ENCODE measurements at regions of chr17 and their contacts with region 1.

Region 1: GRCh38 chr17:68172461-68172954 is 75.3 kb upstream of the AMZ2 start:
- DNase-seq: peak; percentile 62
- H3K4me3 ChIP-seq: no peak overlapping the region
- H3K27ac ChIP-seq: no peak overlapping the region
- H3K4me1 ChIP-seq: no peaks in the 10 kb centered on the region
- H3K27me3 ChIP-seq: no peaks in the 10 kb centered on the region
- CTCF ChIP-seq: peak; percentile 83 to 84
- POLR2A ChIP-seq: no peak

Region 2: DNA sequence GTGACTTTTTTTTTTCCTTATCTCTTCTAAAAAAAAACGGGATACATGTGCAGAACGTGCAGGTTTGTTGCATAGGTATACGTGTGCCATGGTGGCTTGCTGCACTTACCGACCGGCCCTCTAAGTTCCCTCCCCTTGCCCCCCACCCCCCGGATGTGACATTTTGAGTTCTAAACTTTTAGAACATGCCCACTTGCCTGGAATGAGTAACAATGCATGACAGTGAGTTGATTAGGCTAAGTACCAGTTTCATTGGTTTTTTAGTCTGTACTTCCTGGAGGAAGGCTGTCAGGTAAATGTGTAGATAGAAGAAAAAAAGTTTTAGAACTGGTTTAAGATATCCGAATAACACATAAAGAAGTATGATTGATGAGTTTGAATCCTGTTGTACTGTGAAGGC is 343.2 kb before region 1 on chr17:
- CTCF ChIA-PET with region 1: no interaction called
- POLR2A ChIA-PET with region 1: no interaction called
- dilution Hi-C with region 1: no loop called
- intact Hi-C with region 1: no loop called
- DNase-seq: no peak
- H3K4me3 ChIP-seq: no peak overlapping the region
- H3K27ac ChIP-seq: no peak overlapping the region
- H3K4me1 ChIP-seq: peaks cover 13% of the 10 kb centered on the region
- H3K27me3 ChIP-seq: no peaks in the 10 kb centered on the region
- CTCF ChIP-seq: no peak
- POLR2A ChIP-seq: no peak

Region 3: DNA sequence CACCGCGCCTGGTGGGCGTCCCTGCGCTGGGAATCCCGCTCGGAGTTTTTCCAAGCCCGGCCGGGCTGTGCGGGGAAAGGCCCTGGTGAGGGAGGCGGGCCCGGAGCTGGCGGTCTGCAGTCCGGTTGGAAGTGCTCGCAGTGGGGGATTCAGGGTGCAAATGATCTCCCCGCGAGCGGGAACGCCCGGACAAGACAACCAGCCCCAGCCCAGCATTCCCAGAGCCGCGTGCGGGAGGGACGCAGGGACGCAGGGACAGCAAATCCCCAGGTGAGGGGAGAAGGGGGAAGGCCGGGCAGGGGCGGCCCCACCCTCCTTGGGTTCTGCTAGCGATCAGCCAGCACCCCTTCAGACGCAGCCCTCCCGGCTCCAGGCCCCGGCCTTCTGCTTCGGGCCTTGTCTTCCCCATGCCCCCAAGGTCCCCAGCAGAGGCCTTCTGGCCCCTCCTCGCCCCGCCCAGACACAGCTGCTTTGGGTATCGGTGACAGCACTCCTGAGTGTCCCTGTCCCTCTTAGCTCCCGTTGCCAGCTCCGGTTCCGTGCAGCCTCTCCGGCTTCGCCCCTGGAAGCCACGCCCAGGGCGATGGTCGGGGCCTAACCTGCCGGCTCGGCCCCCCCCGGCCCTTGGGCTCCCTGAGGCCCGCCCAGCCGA is 24.6 kb after region 1 on chr17:
- CTCF ChIA-PET with region 1: interaction called, 29 read pairs
- POLR2A ChIA-PET with region 1: no interaction called
- dilution Hi-C with region 1: no loop called
- intact Hi-C with region 1: loop called (anchors 1 kb)
- DNase-seq: no peak
- H3K4me3 ChIP-seq: no peak overlapping the region
- H3K27ac ChIP-seq: no peak overlapping the region
- H3K4me1 ChIP-seq: peaks cover 12% of the 10 kb centered on the region
- H3K27me3 ChIP-seq: peaks cover 46 to 72% of the 10 kb centered on the region in 2 experiments
- CTCF ChIP-seq: no peak
- POLR2A ChIP-seq: no peak

Region 4: DNA sequence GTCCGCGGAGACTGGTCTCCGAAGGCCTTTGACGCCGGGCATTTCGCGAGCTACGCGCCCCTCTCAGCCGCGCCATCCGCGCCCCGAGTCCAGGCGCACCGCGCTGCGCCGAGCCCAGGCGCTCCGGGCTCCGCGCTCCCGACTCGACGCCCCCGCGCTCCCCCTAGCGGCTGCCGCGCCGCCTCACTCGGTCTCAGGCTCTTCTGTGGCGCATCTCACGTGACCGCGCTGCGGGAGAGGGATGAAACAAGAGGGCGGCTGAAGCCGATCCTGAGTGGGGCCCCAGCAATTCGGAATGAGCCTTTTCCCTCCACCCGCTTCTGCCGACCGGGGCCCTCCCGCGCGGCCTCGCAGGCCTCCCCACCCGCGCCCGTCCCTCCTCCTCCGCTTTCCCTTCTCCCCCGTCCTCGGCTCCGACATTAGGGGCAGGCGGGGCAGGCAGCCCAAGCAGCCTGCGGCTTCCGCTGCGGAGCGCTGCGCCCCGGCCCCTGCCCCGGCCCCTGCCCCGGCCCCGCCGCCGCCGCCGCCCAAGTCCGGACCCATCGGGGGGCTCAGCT is 32.8 kb after region 1 on chr17:
- CTCF ChIA-PET with region 1: interaction called, 29 read pairs
- POLR2A ChIA-PET with region 1: no interaction called
- dilution Hi-C with region 1: no loop called
- intact Hi-C with region 1: loop called (anchors 1 kb)
- DNase-seq: peak; percentile 88
- H3K4me3 ChIP-seq: peak overlapping the region; percentile 38 to 56 (median 50)
- H3K27ac ChIP-seq: peak overlapping the region; percentile 52
- H3K4me1 ChIP-seq: peaks cover 4% of the 10 kb centered on the region
- H3K27me3 ChIP-seq: peaks cover 0 to under 1% of the 10 kb centered on the region in 2 experiments
- CTCF ChIP-seq: peak; percentile 84 to 96
- POLR2A ChIP-seq: peak; percentile 77

Region 5: GRCh38 chr17:68255731-68256538 is 83.4 kb after region 1 on chr17:
- CTCF ChIA-PET with region 1: no interaction called
- POLR2A ChIA-PET with region 1: no interaction called
- dilution Hi-C with region 1: no loop called
- intact Hi-C with region 1: loop called (anchors 5 kb)
- DNase-seq: no peak
- H3K4me3 ChIP-seq: no peak overlapping the region
- H3K27ac ChIP-seq: no peak overlapping the region
- H3K4me1 ChIP-seq: peaks cover 20% of the 10 kb centered on the region
- H3K27me3 ChIP-seq: no peaks in the 10 kb centered on the region
- CTCF ChIP-seq: no peak
- POLR2A ChIP-seq: no peak

Region 6: GRCh38 chr17:68435876-68436842 is 263.7 kb after region 1 on chr17:
- CTCF ChIA-PET with region 1: interaction called, 5 read pairs
- POLR2A ChIA-PET with region 1: interaction called, 9 read pairs
- dilution Hi-C with region 1: no loop called
- intact Hi-C with region 1: loop called (anchors 1 kb)
- DNase-seq: peak; percentile 83
- H3K4me3 ChIP-seq: no peak overlapping the region
- H3K27ac ChIP-seq: peak overlapping the region; percentile 63
- H3K4me1 ChIP-seq: peaks cover 30% of the 10 kb centered on the region
- H3K27me3 ChIP-seq: no peaks in the 10 kb centered on the region
- CTCF ChIP-seq: peak; percentile 89 to 95
- POLR2A ChIP-seq: no peak

Region 7: DNA sequence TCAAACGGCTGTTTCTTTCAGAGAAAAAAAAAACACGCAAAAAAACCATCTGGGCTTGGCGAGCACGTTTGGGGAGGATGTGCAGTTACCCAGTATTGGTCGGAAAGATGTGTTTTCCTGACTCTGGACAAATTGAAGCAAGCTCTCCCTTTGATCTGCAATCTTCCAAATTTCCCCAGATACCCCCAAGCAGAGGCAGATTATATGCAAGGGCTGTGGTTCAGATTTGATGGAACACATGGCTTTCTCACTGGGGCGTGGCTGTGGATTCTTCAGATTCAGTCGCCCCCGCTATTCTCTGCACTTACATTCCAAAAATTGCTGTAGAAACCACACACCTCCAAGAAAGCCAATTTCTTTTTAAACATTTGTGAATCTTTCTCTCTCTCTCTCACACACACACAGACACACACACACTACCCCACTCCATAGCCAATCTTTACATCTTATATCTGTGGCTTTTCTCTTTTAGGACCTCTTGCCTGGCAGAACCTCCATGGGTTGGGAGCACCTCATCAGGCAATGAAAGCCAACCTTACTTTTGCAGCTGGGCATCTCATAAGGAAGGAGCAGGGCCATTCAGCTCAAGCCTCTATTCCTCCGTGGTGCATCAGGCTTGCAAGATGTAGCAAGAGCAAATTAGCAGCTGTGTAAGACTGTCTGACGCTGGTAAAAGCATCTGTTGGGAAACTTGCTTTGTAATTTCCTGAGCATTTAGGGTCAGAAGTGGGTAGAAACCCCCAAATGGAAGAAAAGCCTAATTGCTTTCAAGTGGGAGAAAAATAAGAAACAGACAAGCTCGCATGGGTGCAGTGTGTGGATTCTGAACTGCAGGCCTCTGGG is 532.6 kb after region 1 on chr17:
- CTCF ChIA-PET with region 1: no interaction called
- POLR2A ChIA-PET with region 1: no interaction called
- dilution Hi-C with region 1: no loop called
- intact Hi-C with region 1: no loop called
- DNase-seq: no peak
- H3K4me3 ChIP-seq: no peak overlapping the region
- H3K27ac ChIP-seq: no peak overlapping the region
- H3K4me1 ChIP-seq: no peaks in the 10 kb centered on the region
- H3K27me3 ChIP-seq: no peaks in the 10 kb centered on the region
- CTCF ChIP-seq: no peak
- POLR2A ChIP-seq: no peak

Region 8: DNA sequence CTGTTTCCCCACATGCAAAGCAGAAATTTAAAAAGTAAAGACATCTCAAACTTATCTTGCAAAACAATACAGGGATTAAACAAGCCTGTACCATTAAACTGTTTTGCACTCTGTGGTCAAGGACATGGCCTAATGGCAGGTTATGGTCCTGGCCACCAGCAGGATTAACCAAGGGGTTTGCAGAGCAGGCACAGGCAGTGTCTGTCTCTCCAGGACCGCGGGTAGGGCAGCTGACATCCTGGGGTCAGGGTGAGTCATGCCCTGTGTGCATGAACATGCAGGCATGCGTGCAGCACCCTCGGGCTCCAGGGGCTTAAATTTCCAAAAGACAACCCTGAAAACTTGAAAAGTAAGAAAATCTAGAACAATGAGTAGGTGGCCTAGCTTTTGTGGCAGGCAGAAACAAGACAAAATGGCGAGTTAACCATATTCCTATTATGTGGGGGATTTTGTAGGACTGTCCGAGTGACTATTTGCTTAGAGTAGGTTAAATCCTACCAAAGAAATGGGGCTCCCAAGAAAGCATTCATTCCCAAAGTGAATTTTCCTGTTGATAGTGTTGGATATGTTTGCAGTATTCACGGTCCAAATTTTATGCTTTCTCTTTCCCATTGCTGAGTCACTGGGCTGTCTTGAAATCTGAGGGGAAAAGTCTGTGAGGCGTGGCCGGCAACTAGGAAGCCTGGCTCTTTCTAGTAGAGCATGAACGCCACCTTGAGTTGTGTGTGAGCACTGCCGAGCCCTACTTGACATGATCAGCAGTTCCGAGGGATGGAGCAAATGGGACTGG is 587.0 kb after region 1 on chr17:
- CTCF ChIA-PET with region 1: interaction called, 4 read pairs
- POLR2A ChIA-PET with region 1: no interaction called
- dilution Hi-C with region 1: no loop called
- intact Hi-C with region 1: loop called (anchors 2 kb)
- DNase-seq: peak; percentile 91
- H3K4me3 ChIP-seq: peak overlapping the region; percentile 17 to 89 (median 73)
- H3K27ac ChIP-seq: peak overlapping the region; percentile 90
- H3K4me1 ChIP-seq: peaks cover 9% of the 10 kb centered on the region
- H3K27me3 ChIP-seq: no peaks in the 10 kb centered on the region
- CTCF ChIP-seq: peak; percentile 92 to 93
- POLR2A ChIP-seq: no peak

Measured in endothelial cell of umbilical vein (primary cell).